CD8-positive, alpha-beta T cell (primary cell): ENCODE measurements at regions of chr14 and their contacts with region 1.

Region 1: GRCh38 chr14:75542588-75543091 is 20.4 kb downstream of the BATF start:
- DNase-seq: peak; percentile 32 to 91 (median 74)
- ATAC-seq: peak; percentile 88
- H3K4me3 ChIP-seq: peak overlapping the region; percentile 1 to 27
- H3K4me3 Mint-ChIP-seq: peak overlapping the region; percentile 73
- H3K27ac ChIP-seq: peak overlapping the region; percentile 19 to 95
- H3K27ac Mint-ChIP-seq: peak overlapping the region; percentile 94
- H3K4me1 ChIP-seq: peaks cover 42% of the 10 kb centered on the region
- H3K4me1 Mint-ChIP-seq: peaks cover 56% of the 10 kb centered on the region
- H3K27me3 ChIP-seq: no peaks in the 10 kb centered on the region
- H3K27me3 Mint-ChIP-seq: no peaks in the 10 kb centered on the region
- CTCF ChIP-seq: no peak

Region 2: DNA sequence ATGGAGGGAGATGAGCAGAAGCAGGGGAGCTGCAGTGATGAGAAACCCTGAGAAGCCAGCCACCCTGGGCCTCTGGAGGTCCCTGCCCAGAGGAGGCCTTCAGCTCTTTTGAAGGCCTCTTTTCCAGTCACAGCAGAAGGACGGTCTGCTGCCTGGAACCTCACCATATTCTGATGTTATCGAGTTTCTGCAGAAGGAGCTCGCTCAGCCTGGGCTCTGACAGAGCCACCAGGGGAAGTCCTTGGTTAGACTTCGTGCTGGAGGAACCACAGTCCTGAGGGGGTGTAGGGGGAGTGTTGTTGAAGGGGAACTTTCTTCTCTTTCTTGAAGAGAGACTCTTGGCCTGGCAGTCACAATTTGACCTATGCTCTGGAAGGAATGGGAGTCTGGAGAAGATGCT is 45.4 kb before region 1 on chr14:
- CTCF ChIA-PET with region 1: no interaction called
- POLR2A ChIA-PET with region 1: interaction called, 4 read pairs
- intact Hi-C with region 1: loop called in 1 of 2 experiments (anchors 5 kb)
- DNase-seq: peak in 4 of 9 experiments; percentile 20 to 63 (median 34)
- ATAC-seq: peak; percentile 65
- H3K4me3 ChIP-seq: no peak overlapping the region
- H3K4me3 Mint-ChIP-seq: no peak overlapping the region
- H3K27ac ChIP-seq: no peak overlapping the region
- H3K27ac Mint-ChIP-seq: no peak overlapping the region
- H3K4me1 ChIP-seq: no peaks in the 10 kb centered on the region
- H3K4me1 Mint-ChIP-seq: peaks cover 13% of the 10 kb centered on the region
- H3K27me3 ChIP-seq: no peaks in the 10 kb centered on the region
- H3K27me3 Mint-ChIP-seq: no peaks in the 10 kb centered on the region
- CTCF ChIP-seq: no peak

Region 3: GRCh38 chr14:75514673-75515628 is 27.7 kb before region 1 on chr14:
- CTCF ChIA-PET with region 1: interaction called, 3 read pairs
- POLR2A ChIA-PET with region 1: interaction called, 10 read pairs
- intact Hi-C with region 1: no loop called
- DNase-seq: peak; percentile 19 to 83 (median 49)
- ATAC-seq: peak; percentile 69
- H3K4me3 ChIP-seq: peak overlapping the region; percentile 34 to 37
- H3K4me3 Mint-ChIP-seq: peak overlapping the region; percentile 83
- H3K27ac ChIP-seq: peak overlapping the region; percentile 20 to 65
- H3K27ac Mint-ChIP-seq: peak overlapping the region; percentile 89
- H3K4me1 ChIP-seq: peaks cover 23% of the 10 kb centered on the region
- H3K4me1 Mint-ChIP-seq: peaks cover 27% of the 10 kb centered on the region
- H3K27me3 ChIP-seq: no peaks in the 10 kb centered on the region
- H3K27me3 Mint-ChIP-seq: no peaks in the 10 kb centered on the region
- CTCF ChIP-seq: no peak

Region 4: GRCh38 chr14:75522224-75522982 is 20.2 kb before region 1 on chr14 and contains the start of gene BATF:
- CTCF ChIA-PET with region 1: interaction called, 3 read pairs
- POLR2A ChIA-PET with region 1: interaction called, 10 read pairs
- intact Hi-C with region 1: loop called (anchors 1 to 2 kb)
- DNase-seq: peak; percentile 37 to 90 (median 73)
- ATAC-seq: peak; percentile 77
- H3K4me3 ChIP-seq: peak within 1 kb of the TSS; percentile 75 to 79
- H3K4me3 Mint-ChIP-seq: peak within 1 kb of the TSS; percentile 98
- H3K27ac ChIP-seq: peak within 1 kb of the TSS; percentile 46 to 93
- H3K27ac Mint-ChIP-seq: peak within 1 kb of the TSS; percentile 93
- H3K4me1 ChIP-seq: peaks cover 53% of the 10 kb centered on the region
- H3K4me1 Mint-ChIP-seq: peaks cover 66% of the 10 kb centered on the region
- H3K27me3 ChIP-seq: no peaks in the 10 kb centered on the region
- H3K27me3 Mint-ChIP-seq: no peaks in the 10 kb centered on the region
- CTCF ChIP-seq: no peak
- total RNA-seq, gene BATF: 3.2 to 4.3 TPM

Region 5: DNA sequence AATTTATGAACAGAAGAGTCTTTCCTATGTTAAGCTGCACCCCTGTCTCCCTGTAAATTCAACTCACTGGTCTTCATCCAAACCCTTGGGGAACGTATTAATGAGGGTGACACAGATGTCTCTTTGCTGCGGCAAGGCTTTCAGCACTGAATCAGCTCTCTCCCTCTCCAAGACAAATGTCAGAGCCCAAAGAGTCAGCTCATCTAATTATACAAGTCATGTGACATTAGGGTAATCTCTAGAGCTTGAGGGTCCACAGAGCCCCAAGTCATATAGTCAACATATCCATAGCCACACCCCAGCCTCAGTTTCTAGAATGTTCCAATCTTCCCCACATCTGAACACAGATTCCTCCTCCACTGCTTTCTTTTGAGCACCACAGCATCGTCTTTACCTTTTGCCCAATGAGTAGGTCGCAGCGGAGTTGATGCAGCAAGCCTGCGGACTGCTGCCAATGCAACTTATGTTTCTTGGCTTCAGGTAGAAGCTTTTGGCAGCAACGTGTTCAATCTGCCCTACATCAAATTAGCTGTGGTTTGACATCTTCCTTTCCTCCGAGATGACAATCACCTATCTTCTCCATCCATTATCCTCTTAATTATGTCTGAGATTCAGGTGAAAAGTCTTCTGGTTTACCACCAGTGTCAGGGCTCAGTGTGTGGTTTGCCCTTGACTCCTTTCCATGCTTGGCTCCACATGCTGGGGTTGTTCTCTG is 15.0 kb before region 1 on chr14:
- CTCF ChIA-PET with region 1: interaction called, 3 read pairs
- POLR2A ChIA-PET with region 1: interaction called, 10 read pairs
- intact Hi-C with region 1: loop called (anchors 1 to 2 kb)
- DNase-seq: no peak
- ATAC-seq: no peak
- H3K4me3 ChIP-seq: no peak overlapping the region
- H3K4me3 Mint-ChIP-seq: no peak overlapping the region
- H3K27ac ChIP-seq: no peak overlapping the region
- H3K27ac Mint-ChIP-seq: peak overlapping the region; percentile 73
- H3K4me1 ChIP-seq: peaks cover 46% of the 10 kb centered on the region
- H3K4me1 Mint-ChIP-seq: peaks cover 80% of the 10 kb centered on the region
- H3K27me3 ChIP-seq: no peaks in the 10 kb centered on the region
- H3K27me3 Mint-ChIP-seq: no peaks in the 10 kb centered on the region
- CTCF ChIP-seq: no peak